ENCODE measurements at regions of chr7 and their contacts with region 1.

Region 1: GRCh38 chr7:37284805-37285231 is 163.8 kb downstream of the ELMO1 start:
- DNase-seq: peak; percentile 56
- ATAC-seq: peak; percentile 39
- H3K4me3 ChIP-seq: no peak overlapping the region
- H3K4me3 Mint-ChIP-seq: no peak overlapping the region
- H3K27ac ChIP-seq: no peak overlapping the region
- H3K27ac Mint-ChIP-seq: peak overlapping the region; percentile 37
- H3K4me1 ChIP-seq: peaks cover 21 to 23% of the 10 kb centered on the region in 2 donors
- H3K4me1 Mint-ChIP-seq: peaks cover 49% of the 10 kb centered on the region
- H3K27me3 ChIP-seq: no peaks in the 10 kb centered on the region
- H3K27me3 Mint-ChIP-seq: no peaks in the 10 kb centered on the region
- CTCF ChIP-seq: peak; percentile 81

Region 2: GRCh38 chr7:37234928-37235327 is 49.9 kb before region 1 on chr7:
- CTCF ChIA-PET with region 1: interaction called, 12 read pairs
- POLR2A ChIA-PET with region 1: no interaction called
- intact Hi-C with region 1: no loop called
- DNase-seq: peak; percentile 58
- ATAC-seq: peak; percentile 24
- H3K4me3 ChIP-seq: no peak overlapping the region
- H3K4me3 Mint-ChIP-seq: no peak overlapping the region
- H3K27ac ChIP-seq: no peak overlapping the region
- H3K27ac Mint-ChIP-seq: no peak overlapping the region
- H3K4me1 ChIP-seq: no peaks in the 10 kb centered on the region
- H3K4me1 Mint-ChIP-seq: peaks cover 2% of the 10 kb centered on the region
- H3K27me3 ChIP-seq: no peaks in the 10 kb centered on the region
- H3K27me3 Mint-ChIP-seq: no peaks in the 10 kb centered on the region
- CTCF ChIP-seq: peak; percentile 81

Region 3: DNA sequence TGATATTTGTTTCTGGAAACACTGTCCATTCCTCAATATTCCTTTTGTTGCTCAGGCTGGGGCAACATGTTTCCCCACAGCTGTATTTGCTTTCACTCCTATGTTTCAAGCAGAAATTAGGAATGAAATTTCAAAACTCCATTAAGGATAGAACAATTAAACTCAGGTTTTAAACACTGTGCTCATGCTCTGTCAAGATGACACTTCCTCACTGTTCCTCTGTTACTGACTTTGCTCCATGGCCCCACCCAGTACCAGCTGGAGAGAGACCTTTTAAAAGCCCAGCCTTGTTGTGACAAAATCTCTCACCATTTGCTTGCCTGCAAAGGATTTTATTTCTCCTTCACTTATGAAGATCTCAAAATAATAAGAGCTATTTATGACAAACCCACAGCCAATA is 33.6 kb before region 1 on chr7:
- CTCF ChIA-PET with region 1: no interaction called
- POLR2A ChIA-PET with region 1: no interaction called
- intact Hi-C with region 1: no loop called
- DNase-seq: no peak
- ATAC-seq: no peak
- H3K4me3 ChIP-seq: no peak overlapping the region
- H3K4me3 Mint-ChIP-seq: no peak overlapping the region
- H3K27ac ChIP-seq: no peak overlapping the region
- H3K27ac Mint-ChIP-seq: no peak overlapping the region
- H3K4me1 ChIP-seq: no peaks in the 10 kb centered on the region
- H3K4me1 Mint-ChIP-seq: peaks cover 13% of the 10 kb centered on the region
- H3K27me3 ChIP-seq: no peaks in the 10 kb centered on the region
- H3K27me3 Mint-ChIP-seq: no peaks in the 10 kb centered on the region
- CTCF ChIP-seq: no peak

Region 4: DNA sequence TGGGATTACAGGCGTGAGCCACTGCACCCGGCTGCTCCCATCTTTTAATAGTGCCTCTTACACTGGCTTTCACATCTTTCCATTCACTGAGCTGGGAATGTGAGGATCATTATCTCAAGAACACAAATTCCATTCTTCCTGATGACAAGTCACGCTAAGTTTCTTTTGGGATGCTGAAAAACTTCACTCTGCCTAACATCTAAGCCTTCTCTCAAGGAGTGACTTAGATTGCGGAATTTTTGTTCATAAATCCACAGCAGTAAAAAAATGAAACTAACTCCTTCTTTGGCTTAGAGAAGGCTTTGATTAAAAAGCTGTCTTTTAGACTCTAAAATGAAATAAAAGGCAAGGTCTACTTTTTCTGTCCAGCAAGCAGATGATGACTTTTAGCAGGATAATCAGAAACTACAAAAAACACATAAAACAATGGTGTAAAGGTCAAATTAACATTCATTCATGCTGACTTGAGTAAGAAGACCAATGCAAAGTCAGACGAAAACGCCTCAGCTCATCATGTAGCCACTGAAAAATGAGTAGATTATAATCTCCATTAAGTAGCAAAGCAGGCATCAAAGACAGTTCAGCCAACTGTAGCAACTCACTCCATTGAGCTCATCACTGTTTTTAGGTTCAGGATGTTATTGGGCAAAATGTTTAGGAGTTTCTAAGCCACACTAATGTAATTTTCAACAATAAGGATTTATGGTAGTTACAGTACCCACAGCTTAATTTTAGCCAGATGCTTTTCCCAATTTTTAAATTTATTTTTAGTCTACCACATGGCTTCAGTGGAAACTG is 14.9 kb before region 1 on chr7:
- CTCF ChIA-PET with region 1: interaction called, 14 read pairs
- POLR2A ChIA-PET with region 1: no interaction called
- intact Hi-C with region 1: no loop called
- DNase-seq: no peak
- ATAC-seq: no peak
- H3K4me3 ChIP-seq: no peak overlapping the region
- H3K4me3 Mint-ChIP-seq: no peak overlapping the region
- H3K27ac ChIP-seq: no peak overlapping the region
- H3K27ac Mint-ChIP-seq: no peak overlapping the region
- H3K4me1 ChIP-seq: peaks cover 10% of the 10 kb centered on the region in 2 donors
- H3K4me1 Mint-ChIP-seq: peaks cover 26% of the 10 kb centered on the region
- H3K27me3 ChIP-seq: no peaks in the 10 kb centered on the region
- H3K27me3 Mint-ChIP-seq: no peaks in the 10 kb centered on the region
- CTCF ChIP-seq: no peak

Region 5: GRCh38 chr7:37311355-37311754 is 26.5 kb after region 1 on chr7:
- CTCF ChIA-PET with region 1: interaction called, 17 read pairs
- POLR2A ChIA-PET with region 1: interaction called, 3 read pairs
- intact Hi-C with region 1: loop called (anchors 2 kb)
- DNase-seq: peak; percentile 66
- ATAC-seq: peak; percentile 62
- H3K4me3 ChIP-seq: no peak overlapping the region
- H3K4me3 Mint-ChIP-seq: peak overlapping the region; percentile 46
- H3K27ac ChIP-seq: peak overlapping the region; percentile 7 to 58
- H3K27ac Mint-ChIP-seq: peak overlapping the region; percentile 88
- H3K4me1 ChIP-seq: peaks cover 48% of the 10 kb centered on the region in 2 donors
- H3K4me1 Mint-ChIP-seq: peaks cover 68% of the 10 kb centered on the region
- H3K27me3 ChIP-seq: no peaks in the 10 kb centered on the region
- H3K27me3 Mint-ChIP-seq: no peaks in the 10 kb centered on the region
- CTCF ChIP-seq: no peak

Region 6: DNA sequence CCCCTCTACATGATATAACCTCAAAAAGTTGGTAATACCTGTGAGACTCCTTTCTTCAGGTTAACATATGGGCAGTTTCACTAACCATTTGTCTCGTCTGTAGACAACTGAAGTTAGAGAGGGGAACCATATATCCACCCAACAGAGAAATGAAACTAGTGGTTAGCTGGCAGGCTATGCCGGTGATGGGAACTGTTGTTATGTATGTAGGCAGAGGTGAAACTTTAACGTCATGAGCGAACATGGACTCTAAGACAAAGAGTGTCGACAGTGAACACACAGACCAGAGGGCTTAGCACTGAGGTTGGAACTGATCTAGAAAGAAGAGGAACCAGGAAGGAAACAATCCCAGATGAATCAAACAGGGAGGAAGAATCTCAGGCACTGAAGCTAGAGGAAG is 51.4 kb after region 1 on chr7:
- CTCF ChIA-PET with region 1: interaction called, 73 read pairs
- POLR2A ChIA-PET with region 1: no interaction called
- intact Hi-C with region 1: no loop called
- DNase-seq: peak; percentile 87
- ATAC-seq: peak; percentile 94
- H3K4me3 ChIP-seq: peak overlapping the region in 4 of 5 experiments; percentile 9 to 46 (median 28)
- H3K4me3 Mint-ChIP-seq: peak overlapping the region; percentile 83
- H3K27ac ChIP-seq: peak overlapping the region; percentile 79 to 89
- H3K27ac Mint-ChIP-seq: peak overlapping the region; percentile 95
- H3K4me1 ChIP-seq: peaks cover 38 to 51% of the 10 kb centered on the region in 2 donors
- H3K4me1 Mint-ChIP-seq: peaks cover 86% of the 10 kb centered on the region
- H3K27me3 ChIP-seq: no peaks in the 10 kb centered on the region
- H3K27me3 Mint-ChIP-seq: no peaks in the 10 kb centered on the region
- CTCF ChIP-seq: no peak

Region 7: GRCh38 chr7:37342688-37343471 is 58.1 kb after region 1 on chr7:
- CTCF ChIA-PET with region 1: interaction called, 208 read pairs
- POLR2A ChIA-PET with region 1: no interaction called
- intact Hi-C with region 1: loop called (anchors 1 kb)
- DNase-seq: peak; percentile 86
- ATAC-seq: peak; percentile 88
- H3K4me3 ChIP-seq: peak overlapping the region; percentile 52 to 82 (median 70)
- H3K4me3 Mint-ChIP-seq: peak overlapping the region; percentile 99
- H3K27ac ChIP-seq: peak overlapping the region; percentile 71 to 75
- H3K27ac Mint-ChIP-seq: peak overlapping the region; percentile 98
- H3K4me1 ChIP-seq: peaks cover 47 to 57% of the 10 kb centered on the region in 2 donors
- H3K4me1 Mint-ChIP-seq: peaks cover 76% of the 10 kb centered on the region
- H3K27me3 ChIP-seq: no peaks in the 10 kb centered on the region
- H3K27me3 Mint-ChIP-seq: no peaks in the 10 kb centered on the region
- CTCF ChIP-seq: peak; percentile 60

Region 8: GRCh38 chr7:37495574-37496184 is 210.9 kb after region 1 on chr7:
- CTCF ChIA-PET with region 1: interaction called, 40 read pairs
- POLR2A ChIA-PET with region 1: no interaction called
- intact Hi-C with region 1: loop called (anchors 5 kb)
- DNase-seq: peak; percentile 52
- ATAC-seq: peak; percentile 68
- H3K4me3 ChIP-seq: no peak overlapping the region
- H3K4me3 Mint-ChIP-seq: no peak overlapping the region
- H3K27ac ChIP-seq: no peak overlapping the region
- H3K27ac Mint-ChIP-seq: no peak overlapping the region
- H3K4me1 ChIP-seq: no peaks in the 10 kb centered on the region
- H3K4me1 Mint-ChIP-seq: no peaks in the 10 kb centered on the region
- H3K27me3 ChIP-seq: no peaks in the 10 kb centered on the region
- H3K27me3 Mint-ChIP-seq: no peaks in the 10 kb centered on the region
- CTCF ChIP-seq: peak; percentile 96